B cell (primary cell): ENCODE measurements at regions of chr4 and their contacts with region 1.

Region 1: DNA sequence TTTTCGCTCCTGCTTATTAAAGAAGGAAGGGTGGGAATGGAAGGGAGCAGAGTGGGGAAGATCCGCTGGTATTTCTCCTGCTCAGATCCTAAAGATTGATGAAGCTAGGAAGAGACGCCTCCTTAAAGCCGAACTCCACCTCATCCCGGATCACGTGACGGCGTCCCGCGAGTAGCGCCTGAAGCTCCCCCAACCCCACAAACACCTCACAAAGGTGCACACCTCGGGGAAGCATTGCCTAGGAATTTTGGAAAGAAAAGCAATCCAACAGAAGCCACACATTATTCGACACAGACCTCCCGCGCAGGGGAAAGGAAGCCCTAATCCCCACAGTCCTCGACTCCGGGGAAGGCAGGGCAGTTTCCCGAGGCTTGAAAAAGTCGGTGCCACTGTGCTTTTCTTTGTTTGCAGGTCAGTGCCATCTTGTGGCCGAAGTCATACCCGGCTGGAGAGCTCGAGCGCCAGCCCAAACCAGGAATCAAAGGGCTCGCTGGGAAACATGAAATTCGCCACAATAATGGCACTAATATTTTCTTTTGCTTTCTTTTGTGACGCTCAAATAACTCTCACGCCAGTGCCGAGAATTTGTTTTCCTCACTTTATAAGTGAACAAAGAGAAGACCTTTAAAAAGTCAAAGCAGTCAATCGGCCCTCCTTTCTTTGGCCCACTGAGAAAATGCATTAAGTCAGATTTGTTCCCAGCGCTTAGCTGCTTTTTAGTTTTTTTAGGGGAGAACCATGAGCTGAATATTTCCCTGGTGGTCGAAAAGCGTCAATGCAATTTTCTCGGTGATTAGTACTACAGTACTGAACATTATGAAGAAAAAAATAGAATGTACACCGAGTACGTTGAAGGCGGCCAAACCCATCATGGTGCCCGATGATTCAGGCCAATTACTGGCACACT is at the start of gene NPY1R:
- DNase-seq: peak; percentile 43
- ATAC-seq: no peak
- H3K4me3 ChIP-seq: peak within 1 kb of the TSS in 4 of 5 experiments; percentile 14 to 44 (median 26)
- H3K4me3 Mint-ChIP-seq: peak within 1 kb of the TSS; percentile 78
- H3K27ac ChIP-seq: no peak within 1 kb of the TSS
- H3K27ac Mint-ChIP-seq: no peak within 1 kb of the TSS
- H3K4me1 ChIP-seq: peaks cover 14 to 21% of the 10 kb centered on the region in 2 donors
- H3K4me1 Mint-ChIP-seq: peaks cover 16% of the 10 kb centered on the region
- H3K27me3 ChIP-seq: peaks cover 0 to 29% (median 17%) of the 10 kb centered on the region in 4 experiments
- H3K27me3 Mint-ChIP-seq: peaks cover 56% of the 10 kb centered on the region
- CTCF ChIP-seq: peak; percentile 38
- total RNA-seq, gene NPY1R: not detected in 2 replicates

Region 2: GRCh38 chr4:163048447-163048846 is 284.3 kb before region 1 on chr4:
- CTCF ChIA-PET with region 1: no interaction called
- POLR2A ChIA-PET with region 1: no interaction called
- intact Hi-C with region 1: loop called (anchors 5 kb)
- DNase-seq: peak; percentile 27
- ATAC-seq: peak; percentile 17
- H3K4me3 ChIP-seq: no peak overlapping the region
- H3K4me3 Mint-ChIP-seq: no peak overlapping the region
- H3K27ac ChIP-seq: no peak overlapping the region
- H3K27ac Mint-ChIP-seq: no peak overlapping the region
- H3K4me1 ChIP-seq: no peaks in the 10 kb centered on the region
- H3K4me1 Mint-ChIP-seq: no peaks in the 10 kb centered on the region
- H3K27me3 ChIP-seq: no peaks in the 10 kb centered on the region
- H3K27me3 Mint-ChIP-seq: peaks cover 13% of the 10 kb centered on the region
- CTCF ChIP-seq: peak; percentile 66